Right lobe of liver (tissue), 6 donors: ENCODE measurements at regions of chr2 and their contacts with region 1.

Region 1: DNA sequence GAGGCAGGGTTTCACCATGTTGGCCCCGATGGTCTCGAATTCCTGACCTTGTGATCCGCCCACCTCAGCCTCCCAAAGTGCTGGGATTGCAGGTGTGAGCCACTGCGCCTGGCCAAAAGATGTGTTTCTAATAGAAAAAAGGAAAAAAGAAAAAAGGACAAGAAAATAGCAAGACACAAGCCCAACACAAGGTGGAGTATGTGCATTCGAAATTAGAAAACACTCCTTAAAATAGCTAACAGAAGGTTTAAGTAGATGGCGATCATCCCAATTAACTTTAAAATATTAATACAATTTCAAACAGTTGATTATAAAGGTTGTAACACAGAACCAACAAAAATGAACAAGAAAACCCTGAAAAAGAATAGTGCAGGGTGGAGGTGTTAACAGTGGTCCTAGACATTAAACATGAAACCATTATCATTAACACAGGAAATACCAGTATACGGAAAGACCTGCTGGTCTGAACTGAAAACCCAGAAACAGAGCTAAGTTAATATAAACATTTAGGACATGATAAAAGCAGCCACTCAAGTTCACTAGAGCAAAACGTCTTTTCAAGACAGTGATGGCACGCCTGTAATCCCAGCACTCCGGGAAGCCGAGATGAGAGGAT is 57.9 kb downstream of the HDLBP start:
- DNase-seq: no peak
- ATAC-seq: no peak
- H3K4me3 ChIP-seq: no peak overlapping the region
- H3K27ac ChIP-seq: peak overlapping the region in 1 of 3 donors; percentile 86
- H3K4me1 ChIP-seq: peaks cover 0 to 32% (median 14%) of the 10 kb centered on the region in 4 donors
- H3K27me3 ChIP-seq: no peaks in the 10 kb centered on the region
- CTCF ChIP-seq: peak in 2 of 4 donors; percentile 5 to 6
- POLR2A ChIP-seq: no peak

Region 2: GRCh38 chr2:241344925-241345651 is 87.6 kb after region 1 on chr2:
- intact Hi-C with region 1: loop called in 1 of 2 experiments (anchors 5 kb)
- DNase-seq: no peak
- ATAC-seq: no peak
- H3K4me3 ChIP-seq: no peak overlapping the region
- H3K27ac ChIP-seq: no peak overlapping the region
- H3K4me1 ChIP-seq: peaks cover 0 to 4% (median 1%) of the 10 kb centered on the region in 4 donors
- H3K27me3 ChIP-seq: no peaks in the 10 kb centered on the region
- CTCF ChIP-seq: no peak
- POLR2A ChIP-seq: no peak